ENCODE measurements at regions of chr18 and their contacts with region 1.

Region 1: DNA sequence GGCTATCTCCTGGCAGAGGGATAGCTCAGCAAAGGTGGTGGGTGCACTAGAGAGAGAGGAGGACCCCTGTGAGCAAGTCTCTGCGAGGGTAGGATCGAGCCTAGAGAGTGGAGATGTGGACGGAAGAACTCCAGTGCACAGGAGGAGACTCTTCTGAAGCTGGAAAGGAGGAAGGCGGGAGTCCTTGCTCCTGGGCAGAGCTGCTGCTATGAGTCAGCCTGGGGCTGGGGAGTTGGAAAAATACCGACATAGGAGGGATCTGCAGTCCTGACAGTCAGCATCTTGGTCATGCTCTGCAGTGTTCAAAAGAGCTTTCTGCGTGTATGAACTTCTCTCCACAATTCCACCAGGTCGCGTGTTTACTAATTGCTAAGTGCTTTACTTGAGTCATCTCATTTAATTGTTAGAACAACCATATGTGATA is 233.8 kb downstream of the LDLRAD4 start:
- DNase-seq: no peak
- H3K4me3 ChIP-seq: no peak overlapping the region
- H3K27ac ChIP-seq: peak overlapping the region; percentile 32
- H3K4me1 ChIP-seq: peaks cover 76% of the 10 kb centered on the region
- H3K27me3 ChIP-seq: no peaks in the 10 kb centered on the region
- CTCF ChIP-seq: no peak

Region 2: GRCh38 chr18:13381944-13382365 is 70.4 kb before region 1 on chr18:
- intact Hi-C with region 1: loop called (anchors 10 kb)
- DNase-seq: peak; percentile 70
- H3K4me3 ChIP-seq: peak overlapping the region; percentile 55
- H3K27ac ChIP-seq: peak overlapping the region; percentile 87
- H3K4me1 ChIP-seq: peaks cover 71% of the 10 kb centered on the region
- H3K27me3 ChIP-seq: no peaks in the 10 kb centered on the region
- CTCF ChIP-seq: no peak

Region 3: DNA sequence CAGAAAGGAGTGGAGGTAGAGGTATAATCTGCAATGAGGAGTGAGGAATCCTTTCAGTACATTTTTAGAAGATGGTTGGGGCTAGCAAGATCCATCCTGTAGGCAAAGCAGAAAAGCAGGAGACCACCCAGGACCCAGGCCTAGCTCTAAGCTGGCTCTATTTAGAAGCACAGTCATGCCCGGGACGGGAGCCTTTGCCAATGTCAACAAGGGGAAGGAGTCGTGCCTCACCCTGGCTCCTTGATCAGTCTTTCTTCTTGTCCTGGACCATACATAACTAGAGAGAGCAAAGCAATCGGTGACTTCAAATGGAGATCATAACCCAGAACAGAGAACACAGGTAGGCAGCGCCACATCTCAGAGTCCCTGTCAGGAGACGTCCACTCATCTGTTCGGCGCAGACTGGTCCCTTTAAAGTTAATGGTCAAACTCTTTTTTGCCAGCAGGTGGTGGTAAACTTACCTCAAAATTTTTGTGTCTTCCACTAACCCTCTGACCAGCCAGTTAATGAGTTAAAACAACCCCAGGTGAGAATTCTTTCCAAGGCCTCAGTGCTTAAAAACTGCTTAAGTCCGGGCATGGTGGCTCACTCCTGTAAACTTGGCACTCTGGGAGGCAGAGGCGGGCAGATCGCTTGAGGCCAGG is 379.6 kb after region 1 on chr18:
- intact Hi-C with region 1: no loop called
- DNase-seq: no peak
- H3K4me3 ChIP-seq: no peak overlapping the region
- H3K27ac ChIP-seq: no peak overlapping the region
- H3K4me1 ChIP-seq: no peaks in the 10 kb centered on the region
- H3K27me3 ChIP-seq: peaks cover 85% of the 10 kb centered on the region
- CTCF ChIP-seq: peak; percentile 24